ENCODE measurements at regions of chr15 and their contacts with region 1.

Region 1: GRCh38 chr15:31977812-31978661 is 52.3 kb upstream of the CHRNA7 start:
- DNase-seq: peak; percentile 69
- H3K4me3 ChIP-seq: no peak overlapping the region
- H3K27ac ChIP-seq: no peak overlapping the region
- H3K4me1 ChIP-seq: peaks cover 0 to 13% (median 5%) of the 10 kb centered on the region in 4 donors
- H3K27me3 ChIP-seq: peaks cover 4% of the 10 kb centered on the region
- CTCF ChIP-seq: peak; percentile 71 to 89 (median 81)
- EP300 ChIP-seq: no peak
- POLR2A ChIP-seq: no peak

Region 2: GRCh38 chr15:31660816-31661215 is 317.2 kb before region 1 on chr15:
- in situ Hi-C with region 1: loop called in 1 of 4 experiments (anchors 25 kb)
- intact Hi-C with region 1: no loop called
- DNase-seq: no peak
- H3K4me3 ChIP-seq: no peak overlapping the region
- H3K27ac ChIP-seq: no peak overlapping the region
- H3K4me1 ChIP-seq: no peaks in the 10 kb centered on the region
- H3K27me3 ChIP-seq: no peaks in the 10 kb centered on the region
- CTCF ChIP-seq: no peak
- EP300 ChIP-seq: no peak
- POLR2A ChIP-seq: no peak

Region 3: GRCh38 chr15:32104061-32104995 is 126.3 kb after region 1 on chr15:
- in situ Hi-C with region 1: no loop called
- intact Hi-C with region 1: no loop called
- DNase-seq: no peak
- H3K4me3 ChIP-seq: no peak overlapping the region
- H3K27ac ChIP-seq: no peak overlapping the region
- H3K4me1 ChIP-seq: peaks cover 0 to 9% (median 0%) of the 10 kb centered on the region in 4 donors
- H3K27me3 ChIP-seq: no peaks in the 10 kb centered on the region
- CTCF ChIP-seq: no peak
- EP300 ChIP-seq: no peak
- POLR2A ChIP-seq: no peak

Measured in transverse colon (tissue), 4 donors.